Activated CD4-positive, alpha-beta memory T cell treated with anti-CD3 and anti-CD28 coated beads for 36 hours (primary cell): ENCODE measurements at regions of chr4 and their contacts with region 1.

Region 1: DNA sequence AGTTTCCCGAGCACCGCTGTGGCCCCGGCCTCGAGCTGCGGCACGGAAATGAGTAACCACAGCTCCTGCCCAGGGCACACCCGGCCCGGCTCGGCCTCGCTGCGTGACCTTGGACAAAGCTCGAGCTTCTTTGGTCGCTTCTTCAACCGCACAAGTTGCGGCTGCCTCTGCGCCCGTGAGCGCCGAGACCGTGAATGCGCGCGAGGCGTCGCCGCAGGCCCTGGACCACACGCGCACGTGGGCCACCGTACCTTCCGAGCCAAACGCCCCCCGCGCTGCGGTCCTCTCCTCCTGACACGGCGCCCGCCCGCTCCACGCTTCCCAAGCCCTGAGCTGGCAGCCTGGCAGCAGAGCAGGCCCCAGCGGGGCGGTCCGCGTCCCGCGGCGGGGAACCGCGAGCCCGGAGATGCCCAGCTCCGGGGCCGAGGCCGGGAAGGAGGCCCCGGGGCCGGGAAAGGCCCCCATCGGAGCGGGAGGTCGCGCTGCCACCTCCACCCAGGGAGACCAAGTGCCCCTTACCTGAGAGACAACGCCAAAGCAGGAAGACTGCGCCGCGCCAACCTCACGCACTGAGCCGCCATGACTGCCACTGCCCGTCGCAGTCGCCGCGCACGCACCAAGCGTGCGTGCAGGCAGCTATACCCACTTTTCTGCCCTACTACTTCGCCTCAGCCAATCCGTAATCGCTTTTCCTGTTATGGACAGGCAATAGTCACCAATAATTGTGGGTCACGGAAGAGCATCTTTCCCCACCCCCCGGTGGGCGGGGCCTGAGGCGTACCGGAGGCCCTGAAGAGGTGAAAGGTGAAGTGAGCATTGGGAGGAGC is at the start of gene GRPEL1:
- DNase-seq: peak; percentile 100
- H3K4me3 Mint-ChIP-seq: peak within 1 kb of the TSS; percentile 95
- H3K27ac Mint-ChIP-seq: peak within 1 kb of the TSS; percentile 87
- H3K4me1 Mint-ChIP-seq: peaks cover 47% of the 10 kb centered on the region
- H3K27me3 Mint-ChIP-seq: peaks cover 2% of the 10 kb centered on the region
- total RNA-seq, gene GRPEL1: 63.8 to 68.7 TPM

Region 2: DNA sequence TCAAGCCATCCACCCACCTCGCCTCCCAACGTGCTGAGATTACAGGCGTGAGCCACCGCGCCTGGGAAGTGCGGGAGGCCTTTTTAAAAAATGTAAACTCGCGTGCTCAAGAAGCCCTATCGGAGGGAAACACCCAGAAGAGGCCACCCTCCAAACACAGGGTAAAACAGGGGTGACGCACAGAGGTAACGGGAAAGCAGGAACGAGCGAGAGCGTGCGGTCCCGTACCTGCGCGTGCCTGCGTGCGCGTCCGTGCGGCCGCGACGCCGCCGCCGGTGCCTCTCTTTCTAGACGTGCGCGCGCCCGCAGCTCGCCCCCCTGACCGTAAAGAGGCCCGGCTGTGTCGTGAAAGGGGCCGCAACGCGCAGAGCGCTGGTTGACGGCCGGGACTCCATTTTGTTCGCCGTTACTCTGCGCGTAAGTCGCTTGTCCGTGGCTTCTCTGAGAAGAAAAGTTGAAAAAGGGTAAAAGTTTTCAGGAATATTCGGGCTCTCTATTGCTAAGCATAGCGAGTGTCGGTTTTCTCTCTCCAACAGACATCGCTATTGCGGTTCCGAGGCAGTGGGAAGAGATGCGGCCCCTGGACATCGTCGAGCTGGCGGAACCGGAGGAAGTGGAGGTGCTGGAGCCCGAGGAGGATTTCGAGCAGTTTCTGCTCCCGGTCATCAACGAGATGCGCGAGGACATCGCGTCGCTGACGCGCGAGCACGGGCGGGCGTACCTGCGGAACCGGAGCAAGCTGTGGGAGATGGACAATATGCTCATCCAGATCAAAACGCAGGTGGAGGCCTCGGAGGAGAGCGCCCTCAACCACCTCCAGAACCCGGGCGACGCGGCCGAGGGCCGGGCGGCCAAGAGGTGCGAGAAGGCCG is 427.1 kb before region 1 on chr4 and contains the start of gene MRFAP1:
- CTCF ChIA-PET with region 1: no interaction called
- POLR2A ChIA-PET with region 1: interaction called, 8 read pairs
- intact Hi-C with region 1: loop called (anchors 1 kb)
- DNase-seq: peak; percentile 97
- H3K4me3 Mint-ChIP-seq: peak within 1 kb of the TSS; percentile 100
- H3K27ac Mint-ChIP-seq: peak within 1 kb of the TSS; percentile 99
- H3K4me1 Mint-ChIP-seq: peaks cover 29% of the 10 kb centered on the region
- H3K27me3 Mint-ChIP-seq: no peaks in the 10 kb centered on the region
- total RNA-seq, gene MRFAP1: 122 to 130 TPM

Region 3: DNA sequence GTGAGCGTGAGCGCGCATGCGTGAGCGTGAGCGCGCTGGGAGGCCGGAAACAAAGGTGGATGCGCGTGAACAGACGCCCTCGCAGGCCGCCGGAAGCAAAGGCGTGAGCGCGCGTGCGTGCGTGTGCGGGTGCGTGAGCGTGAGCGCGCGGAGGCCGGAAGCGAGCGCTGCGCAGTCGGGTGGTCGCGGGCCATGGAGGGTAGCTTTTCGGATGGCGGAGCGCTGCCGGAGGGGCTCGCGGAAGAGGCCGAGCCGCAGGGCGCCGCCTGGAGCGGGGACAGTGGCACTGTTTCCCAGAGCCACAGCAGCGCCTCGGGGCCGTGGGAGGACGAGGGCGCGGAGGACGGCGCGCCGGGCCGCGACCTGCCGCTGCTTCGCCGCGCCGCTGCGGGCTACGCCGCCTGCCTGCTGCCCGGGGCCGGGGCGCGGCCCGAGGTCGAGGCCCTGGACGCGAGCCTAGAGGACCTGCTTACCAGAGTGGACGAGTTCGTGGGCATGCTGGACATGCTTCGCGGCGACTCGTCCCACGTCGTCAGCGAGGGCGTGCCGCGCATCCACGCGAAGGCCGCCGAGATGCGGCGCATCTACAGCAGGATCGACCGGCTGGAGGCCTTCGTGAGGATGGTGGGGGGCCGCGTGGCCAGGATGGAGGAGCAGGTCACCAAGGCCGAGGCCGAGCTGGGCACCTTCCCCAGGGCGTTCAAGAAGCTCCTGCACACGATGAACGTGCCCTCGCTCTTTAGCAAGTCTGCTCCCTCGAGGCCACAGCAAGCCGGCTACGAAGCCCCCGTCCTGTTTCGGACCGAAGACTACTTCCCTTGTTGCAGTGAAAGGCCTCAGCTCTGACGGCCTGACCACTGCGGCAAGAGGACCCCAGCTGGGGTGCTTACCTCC is 351.4 kb before region 1 on chr4 and contains the start of gene BLOC1S4:
- CTCF ChIA-PET with region 1: interaction called, 71 read pairs
- POLR2A ChIA-PET with region 1: interaction called, 8 read pairs
- intact Hi-C with region 1: loop called (anchors 1 kb)
- DNase-seq: peak; percentile 92
- H3K4me3 Mint-ChIP-seq: peak within 1 kb of the TSS; percentile 90
- H3K27ac Mint-ChIP-seq: peak within 1 kb of the TSS; percentile 97
- H3K4me1 Mint-ChIP-seq: peaks cover 27% of the 10 kb centered on the region
- H3K27me3 Mint-ChIP-seq: peaks cover 3% of the 10 kb centered on the region
- total RNA-seq, gene BLOC1S4: 17.0 to 19.7 TPM

Region 4: GRCh38 chr4:6824071-6824470 is 243.6 kb before region 1 on chr4:
- CTCF ChIA-PET with region 1: no interaction called
- POLR2A ChIA-PET with region 1: no interaction called
- intact Hi-C with region 1: no loop called
- DNase-seq: no peak
- H3K4me3 Mint-ChIP-seq: no peak overlapping the region
- H3K27ac Mint-ChIP-seq: no peak overlapping the region
- H3K4me1 Mint-ChIP-seq: peaks cover 18% of the 10 kb centered on the region
- H3K27me3 Mint-ChIP-seq: no peaks in the 10 kb centered on the region

Region 5: GRCh38 chr4:6909073-6909965 is 158.3 kb before region 1 on chr4 and contains the start of gene TBC1D14:
- CTCF ChIA-PET with region 1: interaction called, 4 read pairs
- POLR2A ChIA-PET with region 1: interaction called, 10 read pairs
- intact Hi-C with region 1: loop called (anchors 1 kb)
- DNase-seq: peak; percentile 89
- H3K4me3 Mint-ChIP-seq: peak within 1 kb of the TSS; percentile 94
- H3K27ac Mint-ChIP-seq: peak within 1 kb of the TSS; percentile 89
- H3K4me1 Mint-ChIP-seq: peaks cover 54% of the 10 kb centered on the region
- H3K27me3 Mint-ChIP-seq: no peaks in the 10 kb centered on the region
- total RNA-seq, gene TBC1D14: 37.1 to 37.3 TPM

Region 6: DNA sequence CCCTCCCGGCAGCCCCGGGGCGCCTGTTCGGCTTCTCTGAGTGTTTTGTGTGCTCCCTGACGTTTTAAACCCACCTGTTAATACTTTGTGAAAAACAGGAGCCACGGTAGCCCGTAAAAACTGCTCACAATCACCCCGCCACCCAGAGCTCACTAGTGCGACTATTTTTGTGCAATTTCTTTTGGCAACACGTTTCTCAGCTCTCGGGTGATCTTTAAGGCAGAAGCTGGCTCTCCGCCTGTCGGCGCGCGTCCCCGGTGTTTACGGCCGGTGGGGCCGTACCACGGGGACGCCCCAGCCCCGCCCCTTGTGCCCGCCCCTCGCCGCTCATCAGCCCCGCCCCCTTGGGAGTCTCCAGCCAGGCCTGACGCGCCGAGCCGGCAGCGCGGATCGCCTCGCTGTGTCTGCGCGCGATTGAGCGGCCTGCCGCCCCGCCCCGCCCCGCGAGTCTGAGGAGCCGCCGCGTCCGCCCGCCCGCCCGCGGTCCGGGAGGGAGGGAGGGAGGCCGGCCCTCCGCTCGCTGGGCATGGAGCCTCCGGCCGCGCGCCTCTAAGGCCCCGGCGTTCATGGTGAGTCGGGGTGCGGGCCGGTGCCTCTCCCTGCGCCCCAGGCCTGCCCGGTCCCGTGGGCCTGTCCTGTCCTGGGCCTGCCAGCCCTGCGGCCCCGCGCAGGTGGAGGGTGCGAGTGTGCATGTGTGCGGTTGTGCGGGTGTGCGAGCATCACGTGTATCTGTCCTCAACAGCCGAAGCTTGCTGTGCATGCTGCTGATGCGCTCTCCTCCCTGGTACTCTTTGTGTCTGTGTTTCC is 80.7 kb before region 1 on chr4:
- CTCF ChIA-PET with region 1: interaction called, 4 read pairs
- POLR2A ChIA-PET with region 1: interaction called, 19 read pairs
- intact Hi-C with region 1: loop called (anchors 1 kb)
- DNase-seq: peak; percentile 96
- H3K4me3 Mint-ChIP-seq: peak overlapping the region; percentile 97
- H3K27ac Mint-ChIP-seq: peak overlapping the region; percentile 92
- H3K4me1 Mint-ChIP-seq: peaks cover 76% of the 10 kb centered on the region
- H3K27me3 Mint-ChIP-seq: no peaks in the 10 kb centered on the region

Region 7: GRCh38 chr4:7052923-7053715 is 14.5 kb before region 1 on chr4:
- CTCF ChIA-PET with region 1: interaction called, 11 read pairs
- POLR2A ChIA-PET with region 1: interaction called, 22 read pairs
- intact Hi-C with region 1: no loop called
- DNase-seq: peak; percentile 54
- H3K4me3 Mint-ChIP-seq: no peak overlapping the region
- H3K27ac Mint-ChIP-seq: peak overlapping the region; percentile 60
- H3K4me1 Mint-ChIP-seq: peaks cover 23% of the 10 kb centered on the region
- H3K27me3 Mint-ChIP-seq: no peaks in the 10 kb centered on the region

Region 8: GRCh38 chr4:7101692-7102515 is 34.2 kb after region 1 on chr4:
- CTCF ChIA-PET with region 1: interaction called, 20 read pairs
- POLR2A ChIA-PET with region 1: interaction called, 9 read pairs
- intact Hi-C with region 1: loop called (anchors 1 kb)
- DNase-seq: peak; percentile 77
- H3K4me3 Mint-ChIP-seq: peak overlapping the region; percentile 86
- H3K27ac Mint-ChIP-seq: no peak overlapping the region
- H3K4me1 Mint-ChIP-seq: peaks cover 11% of the 10 kb centered on the region
- H3K27me3 Mint-ChIP-seq: peaks cover under 1% of the 10 kb centered on the region